Endothelial cell of umbilical vein (primary cell): ENCODE measurements at regions of chr11 and their contacts with region 1.

Region 1: DNA sequence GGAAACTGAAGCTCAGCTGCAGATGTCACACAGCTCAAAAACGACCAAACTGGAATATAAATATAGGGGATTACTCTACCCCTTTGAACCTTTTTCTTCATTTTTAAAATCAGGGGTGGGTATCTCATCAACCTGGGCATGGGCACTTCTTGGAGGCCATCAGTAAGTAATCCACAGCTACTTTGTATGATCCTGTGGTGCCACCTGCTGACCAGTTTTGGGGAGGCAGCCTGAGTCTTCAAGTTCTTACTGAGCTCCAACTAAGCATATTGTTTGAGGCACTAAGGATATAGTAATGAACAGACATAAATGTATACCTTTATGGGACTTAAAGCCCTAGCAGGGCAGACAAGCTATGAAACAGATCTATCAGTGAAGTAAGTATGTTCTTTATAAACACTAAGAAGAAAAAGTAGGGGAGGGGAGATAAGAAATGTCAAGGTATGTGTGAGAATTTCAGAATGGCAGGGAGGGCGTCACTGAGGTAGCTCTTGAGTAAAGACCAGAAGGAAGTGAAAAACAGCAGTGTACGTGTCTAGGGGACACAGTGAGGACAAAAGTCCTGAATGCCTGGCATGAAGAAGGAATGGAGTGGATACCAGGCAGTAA is 18.4 kb downstream of the TUB start:
- DNase-seq: peak; percentile 87
- H3K4me3 ChIP-seq: no peak overlapping the region
- H3K27ac ChIP-seq: no peak overlapping the region
- H3K4me1 ChIP-seq: no peaks in the 10 kb centered on the region
- H3K27me3 ChIP-seq: no peaks in the 10 kb centered on the region
- CTCF ChIP-seq: peak; percentile 68 to 76
- POLR2A ChIP-seq: no peak

Region 2: DNA sequence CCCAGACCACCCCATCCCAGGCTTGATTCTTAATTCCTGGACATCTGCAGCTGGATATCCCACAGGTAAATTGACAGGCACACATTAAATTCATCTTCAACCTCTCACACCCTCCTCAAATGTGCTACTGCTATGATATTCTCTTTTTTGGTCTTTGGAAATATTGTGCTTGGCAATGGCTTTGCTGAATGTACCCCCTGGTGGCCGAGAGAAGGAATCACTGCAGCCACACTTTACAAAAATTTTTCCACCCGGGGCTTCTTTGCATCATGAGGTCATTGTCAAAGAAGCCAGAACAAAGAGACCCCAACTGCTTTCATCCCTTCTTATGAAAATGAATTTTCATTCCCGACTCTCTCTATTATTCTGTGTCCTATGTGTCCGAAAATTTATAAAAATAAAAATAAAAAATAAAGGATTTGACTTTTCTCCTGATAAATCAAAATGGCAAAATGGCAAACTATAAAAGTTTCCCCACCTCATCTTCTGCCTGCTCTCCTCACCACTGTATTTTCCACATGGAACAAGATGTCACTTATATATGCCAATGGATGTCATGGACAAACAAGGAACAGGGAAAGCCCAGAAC is 411.1 kb before region 1 on chr11:
- CTCF ChIA-PET with region 1: interaction called, 3 read pairs
- POLR2A ChIA-PET with region 1: no interaction called
- dilution Hi-C with region 1: no loop called
- intact Hi-C with region 1: loop called (anchors 10 kb)
- DNase-seq: peak; percentile 36
- H3K4me3 ChIP-seq: no peak overlapping the region
- H3K27ac ChIP-seq: no peak overlapping the region
- H3K4me1 ChIP-seq: no peaks in the 10 kb centered on the region
- H3K27me3 ChIP-seq: peaks cover 46 to 50% of the 10 kb centered on the region in 2 experiments
- CTCF ChIP-seq: peak; percentile 72 to 77
- POLR2A ChIP-seq: no peak

Region 3: DNA sequence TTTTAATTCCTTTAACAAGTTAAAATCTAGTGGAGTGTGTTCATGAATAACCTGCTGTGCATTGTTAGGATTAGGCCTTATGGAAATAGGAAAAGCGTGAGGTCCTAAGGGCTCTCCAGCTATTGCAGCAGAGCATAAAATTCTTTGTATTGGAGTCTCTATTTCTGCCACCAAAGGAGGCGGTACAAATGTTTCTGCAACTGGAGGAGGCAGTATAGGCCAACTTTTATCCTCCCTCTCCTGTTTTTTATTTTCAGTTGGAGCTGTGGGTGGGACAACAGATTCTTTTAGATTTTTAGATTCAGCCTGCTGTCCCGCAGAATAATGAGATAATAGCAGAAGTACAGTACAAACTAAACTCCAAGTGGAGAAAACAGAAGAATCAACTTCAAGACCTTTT is 194.5 kb before region 1 on chr11:
- CTCF ChIA-PET with region 1: interaction called, 12 read pairs
- POLR2A ChIA-PET with region 1: no interaction called
- dilution Hi-C with region 1: no loop called
- intact Hi-C with region 1: loop called (anchors 5 kb)
- DNase-seq: peak; percentile 38
- H3K4me3 ChIP-seq: no peak overlapping the region
- H3K27ac ChIP-seq: no peak overlapping the region
- H3K4me1 ChIP-seq: no peaks in the 10 kb centered on the region
- H3K27me3 ChIP-seq: peaks cover 2 to 8% of the 10 kb centered on the region in 2 experiments
- CTCF ChIP-seq: peak in 1 of 2 donors; percentile 11
- POLR2A ChIP-seq: no peak

Region 4: GRCh38 chr11:8006349-8006977 is 92.9 kb before region 1 on chr11:
- CTCF ChIA-PET with region 1: interaction called, 822 read pairs
- POLR2A ChIA-PET with region 1: interaction called, 7 read pairs
- dilution Hi-C with region 1: no loop called
- intact Hi-C with region 1: loop called (anchors 1 kb)
- DNase-seq: peak; percentile 61
- H3K4me3 ChIP-seq: no peak overlapping the region
- H3K27ac ChIP-seq: no peak overlapping the region
- H3K4me1 ChIP-seq: no peaks in the 10 kb centered on the region
- H3K27me3 ChIP-seq: peaks cover 0 to 2% of the 10 kb centered on the region in 2 experiments
- CTCF ChIP-seq: peak; percentile 83
- POLR2A ChIP-seq: no peak

Region 5: GRCh38 chr11:8033305-8034105 is 65.9 kb before region 1 on chr11:
- CTCF ChIA-PET with region 1: interaction called, 528 read pairs
- POLR2A ChIA-PET with region 1: no interaction called
- dilution Hi-C with region 1: no loop called
- intact Hi-C with region 1: loop called (anchors 1 kb)
- DNase-seq: peak; percentile 63
- H3K4me3 ChIP-seq: no peak overlapping the region
- H3K27ac ChIP-seq: no peak overlapping the region
- H3K4me1 ChIP-seq: no peaks in the 10 kb centered on the region
- H3K27me3 ChIP-seq: no peaks in the 10 kb centered on the region
- CTCF ChIP-seq: peak; percentile 83 to 92
- POLR2A ChIP-seq: no peak

Region 6: DNA sequence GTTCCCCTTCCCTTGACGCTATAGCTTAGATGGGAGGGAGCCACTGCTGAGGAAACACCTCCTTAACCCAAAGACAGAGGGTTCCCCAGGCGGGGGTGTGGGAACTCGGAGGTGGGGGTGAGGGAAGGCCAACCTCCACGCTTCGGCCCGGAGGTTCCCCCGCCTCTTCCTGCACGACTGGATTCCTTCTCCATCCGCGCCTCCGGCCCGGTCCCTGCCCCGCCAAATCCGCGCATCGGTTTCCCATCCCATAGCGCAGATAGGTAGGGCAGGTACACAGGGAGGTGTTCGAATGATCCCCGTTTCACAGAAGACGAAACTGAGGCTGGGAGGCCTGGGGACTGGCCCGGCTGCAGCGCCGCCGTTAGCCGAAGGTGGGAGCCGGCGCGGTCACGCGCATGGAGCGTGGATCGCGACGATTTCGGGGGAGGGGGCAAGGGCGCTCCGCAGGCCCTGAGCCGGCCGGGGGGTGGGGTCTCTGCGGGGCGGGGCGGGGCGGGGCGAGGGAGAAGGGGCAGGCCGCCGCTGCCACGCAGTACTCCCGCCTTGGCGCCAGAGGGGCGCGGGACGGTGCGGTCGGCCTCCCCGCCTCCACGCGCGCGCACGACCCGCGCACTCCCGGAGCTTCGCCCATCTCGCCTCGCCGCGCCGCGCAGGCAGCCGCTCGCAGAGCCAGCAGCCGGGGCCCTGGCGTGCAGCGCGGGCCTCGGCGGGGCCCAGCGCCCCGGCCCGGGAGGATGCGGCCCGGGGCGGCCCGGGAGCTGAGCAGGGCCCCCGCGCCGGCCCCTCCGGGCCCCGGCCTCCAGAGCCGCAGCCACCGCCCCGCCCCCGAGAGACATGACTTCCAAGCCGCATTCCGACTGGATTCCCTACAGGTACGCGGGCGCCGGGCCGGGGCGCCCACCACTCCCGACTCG is 18.5 kb before region 1 on chr11 and contains the start of gene TUB:
- CTCF ChIA-PET with region 1: interaction called, 84 read pairs
- POLR2A ChIA-PET with region 1: no interaction called
- dilution Hi-C with region 1: no loop called
- intact Hi-C with region 1: no loop called
- DNase-seq: no peak
- H3K4me3 ChIP-seq: peak within 1 kb of the TSS in 2 of 3 experiments; percentile 35 to 42
- H3K27ac ChIP-seq: no peak within 1 kb of the TSS
- H3K4me1 ChIP-seq: peaks cover 6% of the 10 kb centered on the region
- H3K27me3 ChIP-seq: peaks cover 2 to 5% of the 10 kb centered on the region in 2 experiments
- CTCF ChIP-seq: no peak
- POLR2A ChIP-seq: no peak
- total RNA-seq, gene TUB: 3.9 and 4.9 TPM in 2 replicates

Region 7: DNA sequence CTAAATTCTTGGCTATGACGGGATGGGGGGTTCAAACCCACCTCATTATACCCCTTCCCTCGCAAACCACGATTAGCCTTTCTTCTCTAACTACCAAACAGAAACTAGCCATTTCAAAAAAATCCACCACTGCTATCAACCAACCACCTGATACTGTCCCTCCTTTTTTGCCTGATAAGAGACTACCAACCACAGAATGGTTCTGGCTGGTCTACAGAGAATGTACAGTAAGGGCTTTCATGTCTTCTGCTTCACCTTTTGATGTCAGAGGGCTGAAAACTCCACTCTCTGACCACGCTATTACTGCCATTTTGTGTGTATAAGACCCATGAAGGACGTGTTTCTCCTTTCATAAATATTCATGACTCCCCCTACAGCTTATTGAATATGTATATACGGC is 50.3 kb after region 1 on chr11:
- CTCF ChIA-PET with region 1: no interaction called
- POLR2A ChIA-PET with region 1: no interaction called
- dilution Hi-C with region 1: no loop called
- intact Hi-C with region 1: no loop called
- DNase-seq: no peak
- H3K4me3 ChIP-seq: no peak overlapping the region
- H3K27ac ChIP-seq: no peak overlapping the region
- H3K4me1 ChIP-seq: no peaks in the 10 kb centered on the region
- H3K27me3 ChIP-seq: peaks cover 0 to 2% of the 10 kb centered on the region in 2 experiments
- CTCF ChIP-seq: no peak
- POLR2A ChIP-seq: no peak